Heart right ventricle (tissue), 16 donors: ENCODE measurements at regions of chr1 and their contacts with region 1.

Region 1: GRCh38 chr1:100152271-100152670 is 19.3 kb downstream of the TRMT13 start:
- DNase-seq: no peak
- ATAC-seq: no peak
- H3K4me3 ChIP-seq: no peak overlapping the region
- H3K27ac ChIP-seq: peak overlapping the region in 1 of 10 donors; percentile 5
- H3K4me1 ChIP-seq: no peaks in the 10 kb centered on the region
- H3K27me3 ChIP-seq: no peaks in the 10 kb centered on the region
- CTCF ChIP-seq: no peak

Region 2: GRCh38 chr1:99869304-99869703 is 283.0 kb before region 1 on chr1:
- intact Hi-C with region 1: loop called in 1 of 10 experiments (anchors 10 kb)
- DNase-seq: no peak
- ATAC-seq: no peak
- H3K4me3 ChIP-seq: no peak overlapping the region
- H3K27ac ChIP-seq: no peak overlapping the region
- H3K4me1 ChIP-seq: peaks cover 0 to 10% (median 0%) of the 10 kb centered on the region in 9 donors
- H3K27me3 ChIP-seq: no peaks in the 10 kb centered on the region
- CTCF ChIP-seq: no peak

Region 3: GRCh38 chr1:99886841-99887240 is 265.4 kb before region 1 on chr1:
- intact Hi-C with region 1: loop called in 1 of 10 experiments (anchors 10 kb)
- DNase-seq: no peak
- ATAC-seq: no peak
- H3K4me3 ChIP-seq: no peak overlapping the region
- H3K27ac ChIP-seq: no peak overlapping the region
- H3K4me1 ChIP-seq: no peaks in the 10 kb centered on the region
- H3K27me3 ChIP-seq: no peaks in the 10 kb centered on the region
- CTCF ChIP-seq: no peak

Region 4: DNA sequence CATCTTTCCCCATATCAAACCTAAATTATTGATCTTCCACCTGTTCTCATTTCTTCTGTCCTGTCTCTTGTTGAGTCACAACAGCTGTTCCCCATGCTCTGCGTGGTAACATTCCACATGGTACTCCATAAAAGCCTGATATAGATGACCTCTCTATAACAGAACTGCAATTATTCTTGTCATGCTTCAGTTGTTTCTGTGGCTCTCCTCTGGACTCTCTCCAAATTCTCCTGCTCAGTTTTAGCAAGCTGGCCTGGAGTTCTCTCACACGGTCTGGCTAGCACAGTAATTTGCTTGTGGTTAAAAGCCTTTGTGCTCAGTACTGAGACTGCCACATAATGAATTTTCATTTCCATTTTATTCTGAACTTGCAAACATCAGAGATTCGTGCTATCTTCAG is 36.3 kb after region 1 on chr1:
- intact Hi-C with region 1: no loop called
- DNase-seq: peak in 1 of 2 donors; percentile 40
- ATAC-seq: peak; percentile 80 to 94 (median 86)
- H3K4me3 ChIP-seq: peak overlapping the region in 1 of 10 donors; percentile 7
- H3K27ac ChIP-seq: peak overlapping the region; percentile 57 to 91 (median 76)
- H3K4me1 ChIP-seq: peaks cover 0 to 21% (median 8%) of the 10 kb centered on the region in 9 donors
- H3K27me3 ChIP-seq: no peaks in the 10 kb centered on the region
- CTCF ChIP-seq: no peak

Region 5: GRCh38 chr1:100292711-100293110 is 140.4 kb after region 1 on chr1:
- intact Hi-C with region 1: loop called in 1 of 10 experiments (anchors 10 kb)
- DNase-seq: no peak
- ATAC-seq: peak in 5 of 8 donors; percentile 47 to 80 (median 69)
- H3K4me3 ChIP-seq: no peak overlapping the region
- H3K27ac ChIP-seq: peak overlapping the region in 5 of 10 donors; percentile 5 to 62 (median 25)
- H3K4me1 ChIP-seq: peaks cover 0 to 10% (median 0%) of the 10 kb centered on the region in 9 donors
- H3K27me3 ChIP-seq: no peaks in the 10 kb centered on the region
- CTCF ChIP-seq: no peak